Naive thymus-derived CD8-positive, alpha-beta T cell (primary cell): ENCODE measurements at regions of chr2 and their contacts with region 1.

Region 1: GRCh38 chr2:157443795-157444640 is at the start of gene CYTIP:
- DNase-seq: peak; percentile 19 to 86 (median 65)
- ATAC-seq: peak; percentile 38 to 55
- H3K4me3 Mint-ChIP-seq: peak within 1 kb of the TSS; percentile 84 to 99 (median 94)
- H3K27ac Mint-ChIP-seq: peak within 1 kb of the TSS; percentile 93 to 100 (median 98)
- H3K4me1 Mint-ChIP-seq: peaks cover 28 to 60% (median 44%) of the 10 kb centered on the region in 4 donors
- H3K27me3 Mint-ChIP-seq: no peaks in the 10 kb centered on the region
- polyA plus RNA-seq, gene CYTIP: 140 to 220 (median 155) TPM

Region 2: DNA sequence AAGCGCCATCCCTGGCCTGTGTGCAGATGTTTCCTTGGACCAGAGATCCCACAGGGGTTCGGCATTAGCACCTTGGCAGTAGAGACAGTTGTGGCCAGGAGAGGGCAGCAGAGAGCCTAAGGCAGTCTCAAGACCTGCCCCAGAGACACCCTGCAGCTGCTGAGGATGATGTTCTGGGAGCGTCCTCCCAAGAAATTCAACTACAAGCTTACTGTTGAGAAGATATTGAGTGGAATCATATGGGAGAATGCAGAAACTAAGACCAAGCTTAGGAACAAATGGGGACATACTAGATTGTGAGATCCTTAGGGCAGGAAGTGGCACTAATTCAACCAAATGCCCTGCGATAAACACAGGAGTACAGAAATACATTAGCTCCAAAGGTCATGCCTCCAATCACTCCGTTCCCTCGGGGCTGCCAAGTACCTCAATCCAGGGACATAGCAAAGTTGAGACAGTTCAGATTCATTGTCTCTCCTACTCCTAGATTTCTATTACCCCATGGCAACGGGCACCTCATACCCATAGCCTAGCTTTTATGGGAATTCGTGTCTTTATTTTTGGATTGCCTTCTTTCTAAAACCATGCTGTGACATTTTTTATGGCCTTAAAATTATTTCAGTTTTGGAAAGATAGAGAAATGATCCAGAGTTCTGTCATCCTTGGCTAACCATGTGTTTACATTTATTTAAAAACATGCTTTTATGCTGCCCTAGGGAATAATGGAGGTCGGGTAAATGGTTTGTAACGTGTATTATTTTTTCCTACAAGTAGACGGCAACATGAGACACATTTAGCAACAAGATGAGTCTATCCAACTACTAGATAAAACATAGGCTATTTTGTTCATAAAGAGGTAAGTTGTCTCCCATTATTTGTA is 116.2 kb before region 1 on chr2:
- POLR2A ChIA-PET with region 1: interaction called, 174 read pairs
- DNase-seq: peak; percentile 74 to 92 (median 82)
- ATAC-seq: peak; percentile 88 to 90
- H3K4me3 Mint-ChIP-seq: peak overlapping the region; percentile 51 to 84 (median 70)
- H3K27ac Mint-ChIP-seq: peak overlapping the region; percentile 8 to 96 (median 93)
- H3K4me1 Mint-ChIP-seq: peaks cover 25 to 55% (median 53%) of the 10 kb centered on the region in 4 donors
- H3K27me3 Mint-ChIP-seq: no peaks in the 10 kb centered on the region

Region 3: GRCh38 chr2:157336137-157337010 is 107.6 kb before region 1 on chr2:
- POLR2A ChIA-PET with region 1: interaction called, 174 read pairs
- DNase-seq: peak in 8 of 10 donors; percentile 17 to 68 (median 40)
- ATAC-seq: peak; percentile 34 to 35
- H3K4me3 Mint-ChIP-seq: peak overlapping the region; percentile 33 to 76 (median 64)
- H3K27ac Mint-ChIP-seq: peak overlapping the region; percentile 17 to 91 (median 82)
- H3K4me1 Mint-ChIP-seq: peaks cover 30 to 74% (median 69%) of the 10 kb centered on the region in 4 donors
- H3K27me3 Mint-ChIP-seq: no peaks in the 10 kb centered on the region

Region 4: DNA sequence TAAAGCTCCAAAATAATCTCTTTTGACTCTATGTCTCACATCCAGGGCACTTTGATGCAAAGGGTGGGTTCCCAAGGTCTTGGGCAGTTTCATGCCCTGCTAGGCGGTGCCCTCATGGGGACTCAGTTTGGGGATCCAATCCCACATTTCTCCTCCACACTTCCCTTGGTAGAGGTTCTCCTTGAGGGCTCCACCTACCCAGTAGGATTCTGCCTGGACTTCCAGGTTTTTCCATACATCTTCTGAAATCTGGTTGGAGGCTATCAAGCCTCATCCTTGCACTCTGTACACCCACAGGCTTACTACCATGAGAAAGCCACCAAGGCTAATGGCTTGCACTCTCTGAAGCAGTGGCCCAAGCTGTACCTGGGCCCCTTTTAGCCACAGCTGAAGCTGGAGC is 68.6 kb before region 1 on chr2:
- POLR2A ChIA-PET with region 1: no interaction called
- DNase-seq: no peak
- ATAC-seq: no peak
- H3K4me3 Mint-ChIP-seq: no peak overlapping the region
- H3K27ac Mint-ChIP-seq: peak overlapping the region in 4 of 10 donors; percentile 36 to 69 (median 48)
- H3K4me1 Mint-ChIP-seq: peaks cover 12 to 28% (median 22%) of the 10 kb centered on the region in 4 donors
- H3K27me3 Mint-ChIP-seq: no peaks in the 10 kb centered on the region

Region 5: GRCh38 chr2:157404363-157404762 is 39.7 kb before region 1 on chr2:
- POLR2A ChIA-PET with region 1: interaction called, 90 read pairs
- DNase-seq: peak; percentile 25 to 92 (median 74)
- ATAC-seq: peak; percentile 93 to 97
- H3K4me3 Mint-ChIP-seq: peak overlapping the region; percentile 48 to 77 (median 66)
- H3K27ac Mint-ChIP-seq: peak overlapping the region; percentile 97 to 100 (median 98)
- H3K4me1 Mint-ChIP-seq: peaks cover 34 to 76% (median 68%) of the 10 kb centered on the region in 4 donors
- H3K27me3 Mint-ChIP-seq: no peaks in the 10 kb centered on the region

Region 6: DNA sequence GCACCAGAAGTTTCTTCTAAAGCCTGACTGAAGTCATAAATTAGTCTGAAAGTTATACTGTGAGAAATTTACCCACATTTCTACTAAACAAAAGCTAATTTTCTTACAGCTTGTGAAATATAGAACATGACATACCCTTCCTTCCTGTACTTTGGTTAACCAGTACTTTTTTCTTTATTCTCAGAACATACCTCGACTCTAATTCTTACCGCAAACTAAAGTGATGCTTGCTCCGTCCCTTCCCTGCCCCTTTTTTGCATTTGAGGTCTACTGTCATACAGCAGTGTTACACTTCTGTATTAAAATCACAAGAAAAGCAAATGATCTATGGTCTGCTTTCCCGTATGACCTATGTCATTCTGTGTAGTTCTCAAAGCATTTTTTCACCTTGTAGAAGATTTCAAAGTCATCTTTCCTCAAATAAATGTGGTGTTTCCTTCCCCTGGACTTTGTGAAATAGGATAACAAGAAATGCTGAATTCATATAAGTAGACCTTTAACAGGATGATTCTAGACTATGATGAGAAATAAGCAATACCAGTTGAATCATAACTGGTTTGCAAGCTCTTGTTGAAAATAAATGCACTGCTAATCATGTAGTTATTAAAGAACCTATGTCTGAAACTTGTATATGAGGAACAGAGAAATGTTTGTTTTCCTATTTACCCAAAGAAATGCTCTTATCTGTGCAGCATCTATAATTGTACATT is 30.5 kb before region 1 on chr2:
- POLR2A ChIA-PET with region 1: interaction called, 411 read pairs
- DNase-seq: peak in 9 of 10 donors; percentile 48 to 91 (median 79)
- ATAC-seq: peak; percentile 80 to 89
- H3K4me3 Mint-ChIP-seq: peak overlapping the region; percentile 37 to 84 (median 74)
- H3K27ac Mint-ChIP-seq: peak overlapping the region; percentile 62 to 98 (median 96)
- H3K4me1 Mint-ChIP-seq: peaks cover 33 to 94% (median 88%) of the 10 kb centered on the region in 4 donors
- H3K27me3 Mint-ChIP-seq: no peaks in the 10 kb centered on the region

Region 7: GRCh38 chr2:157420771-157421323 is 23.2 kb before region 1 on chr2:
- POLR2A ChIA-PET with region 1: interaction called, 411 read pairs
- DNase-seq: no peak
- ATAC-seq: peak; percentile 2 to 6
- H3K4me3 Mint-ChIP-seq: peak overlapping the region; percentile 31 to 78 (median 62)
- H3K27ac Mint-ChIP-seq: peak overlapping the region; percentile 88 to 99 (median 93)
- H3K4me1 Mint-ChIP-seq: peaks cover 22 to 85% (median 69%) of the 10 kb centered on the region in 4 donors
- H3K27me3 Mint-ChIP-seq: no peaks in the 10 kb centered on the region

Region 8: DNA sequence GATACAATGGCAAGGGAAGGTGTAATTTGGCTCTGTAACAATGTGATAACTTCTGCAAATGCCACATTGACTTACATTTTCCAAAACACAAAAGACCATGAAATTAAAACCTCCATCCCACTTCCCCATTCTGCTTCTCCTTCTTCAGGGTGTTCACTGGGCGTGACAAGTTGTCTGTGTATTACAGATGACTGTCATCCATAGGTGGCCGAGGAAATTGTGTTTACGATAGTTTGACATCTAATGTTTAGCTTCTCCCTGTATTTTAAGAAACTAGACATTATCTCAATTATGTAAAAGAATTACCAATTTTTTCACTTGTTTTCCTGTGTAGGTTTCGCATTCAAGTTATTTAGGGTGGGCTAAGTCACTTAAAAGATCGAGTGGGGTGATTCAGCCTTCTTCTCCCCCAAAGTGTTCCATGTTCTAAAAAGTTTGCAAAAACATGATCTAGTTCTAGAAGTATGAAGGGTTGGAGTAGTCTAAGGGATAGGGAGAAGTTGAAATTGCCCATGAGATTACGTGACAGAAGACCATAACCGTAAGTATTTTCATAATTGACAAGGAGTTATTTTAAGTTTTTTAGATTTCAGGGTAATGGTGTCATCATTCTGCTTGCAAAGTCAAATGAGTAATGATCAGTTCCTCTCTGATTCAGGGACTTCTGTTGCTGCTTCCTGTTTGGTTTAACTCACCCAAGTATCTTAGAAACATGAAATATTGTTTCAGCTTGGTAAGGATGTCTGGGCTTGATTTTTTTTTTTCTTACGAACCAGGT is 25.1 kb after region 1 on chr2:
- POLR2A ChIA-PET with region 1: interaction called, 17 read pairs
- DNase-seq: peak in 5 of 10 donors; percentile 19 to 81 (median 61)
- ATAC-seq: peak; percentile 77 to 93
- H3K4me3 Mint-ChIP-seq: peak overlapping the region; percentile 49 to 82 (median 70)
- H3K27ac Mint-ChIP-seq: peak overlapping the region; percentile 93 to 99 (median 96)
- H3K4me1 Mint-ChIP-seq: peaks cover 28 to 83% (median 67%) of the 10 kb centered on the region in 4 donors
- H3K27me3 Mint-ChIP-seq: no peaks in the 10 kb centered on the region

Region 9: GRCh38 chr2:157509744-157510143 is 65.7 kb after region 1 on chr2:
- POLR2A ChIA-PET with region 1: no interaction called
- DNase-seq: no peak
- ATAC-seq: no peak
- H3K4me3 Mint-ChIP-seq: no peak overlapping the region
- H3K27ac Mint-ChIP-seq: no peak overlapping the region
- H3K4me1 Mint-ChIP-seq: peaks cover 0 to 5% (median 2%) of the 10 kb centered on the region in 4 donors
- H3K27me3 Mint-ChIP-seq: peaks cover 7 to 12% (median 10%) of the 10 kb centered on the region in 5 donors